ENCODE measurements at regions of chr1 and their contacts with region 1.

Region 1: GRCh38 chr1:110203021-110203661 is 7.0 kb upstream of the KCNC4 start:
- DNase-seq: peak; percentile 55 to 83
- H3K4me3 ChIP-seq: no peak overlapping the region
- H3K27ac ChIP-seq: peak overlapping the region; percentile 19
- H3K4me1 ChIP-seq: peaks cover 35% of the 10 kb centered on the region
- H3K27me3 ChIP-seq: no peaks in the 10 kb centered on the region
- CTCF ChIP-seq: peak; percentile 99

Region 2: DNA sequence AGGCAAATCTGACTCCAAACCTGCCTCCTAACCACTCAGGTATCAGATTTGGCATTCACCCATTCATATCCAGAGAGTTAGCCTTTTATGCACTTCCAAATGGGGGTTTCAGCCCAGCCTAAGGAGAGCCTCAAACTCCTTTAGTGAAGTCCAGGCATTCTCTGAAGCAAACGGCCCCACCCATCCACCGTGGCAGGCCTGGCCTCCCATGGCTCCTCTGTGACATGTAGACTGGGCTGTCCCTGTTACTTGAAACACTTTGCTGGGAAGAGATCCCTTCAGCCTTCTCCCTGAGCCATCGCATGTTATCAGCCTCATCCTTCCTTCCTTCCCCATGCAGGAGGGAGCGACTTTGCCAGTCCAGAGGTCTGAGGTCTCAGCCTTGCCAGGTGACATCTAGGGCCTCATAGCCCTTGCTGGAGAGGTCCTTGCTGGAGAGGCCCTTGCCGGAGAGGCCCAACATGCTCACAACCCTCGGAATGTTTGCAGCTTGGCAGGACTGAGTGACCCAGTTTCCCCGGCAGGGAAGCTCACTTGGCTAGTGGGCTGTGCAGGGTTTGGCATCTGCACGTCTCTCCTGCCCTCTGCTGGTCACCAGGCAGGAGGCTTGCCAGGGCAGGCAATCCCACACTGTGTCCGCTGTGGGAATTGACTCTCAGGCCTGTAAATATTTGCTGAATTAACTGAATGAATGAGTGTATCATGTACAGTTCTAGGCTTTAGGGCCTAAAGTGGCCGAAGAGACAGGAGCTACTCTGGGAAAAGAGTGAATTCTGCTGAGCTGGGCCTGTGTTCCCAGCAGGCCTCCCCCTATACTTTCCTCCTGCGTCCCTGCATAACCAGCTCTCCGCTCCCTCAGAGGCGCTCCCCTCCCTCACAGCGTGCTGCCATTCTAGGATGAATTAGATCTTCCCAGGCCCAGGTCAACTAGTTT is 109.3 kb after region 1 on chr1:
- CTCF ChIA-PET with region 1: interaction called, 33 read pairs
- POLR2A ChIA-PET with region 1: interaction called, 3 read pairs
- intact Hi-C with region 1: loop called (anchors 1 kb)
- DNase-seq: peak; percentile 72 to 74
- H3K4me3 ChIP-seq: no peak overlapping the region
- H3K27ac ChIP-seq: no peak overlapping the region
- H3K4me1 ChIP-seq: no peaks in the 10 kb centered on the region
- H3K27me3 ChIP-seq: no peaks in the 10 kb centered on the region
- CTCF ChIP-seq: peak; percentile 99

Region 3: DNA sequence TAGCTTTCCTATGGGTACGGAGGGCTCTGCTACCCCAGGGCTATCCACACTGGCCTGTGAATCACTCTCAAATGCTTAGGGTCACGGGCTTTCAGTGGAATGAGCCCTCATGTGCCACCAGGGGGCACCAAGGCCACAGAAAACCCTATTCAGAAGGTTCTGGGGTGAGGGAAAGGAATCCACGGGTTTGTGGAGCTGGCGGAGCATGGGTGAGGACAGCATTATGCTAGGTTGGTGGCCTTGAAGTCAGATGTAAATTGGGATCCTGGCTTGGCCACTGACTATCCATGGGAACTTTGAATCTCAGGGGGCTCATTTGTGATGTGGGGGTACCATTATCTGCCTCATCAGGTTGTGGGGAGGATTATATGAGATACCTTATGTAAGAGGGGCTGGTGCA is 209.4 kb after region 1 on chr1:
- CTCF ChIA-PET with region 1: interaction called, 21 read pairs
- POLR2A ChIA-PET with region 1: no interaction called
- intact Hi-C with region 1: loop called (anchors 5 kb)
- DNase-seq: peak; percentile 60 to 74
- H3K4me3 ChIP-seq: no peak overlapping the region
- H3K27ac ChIP-seq: no peak overlapping the region
- H3K4me1 ChIP-seq: peaks cover 9% of the 10 kb centered on the region
- H3K27me3 ChIP-seq: no peaks in the 10 kb centered on the region
- CTCF ChIP-seq: peak; percentile 96

Region 4: DNA sequence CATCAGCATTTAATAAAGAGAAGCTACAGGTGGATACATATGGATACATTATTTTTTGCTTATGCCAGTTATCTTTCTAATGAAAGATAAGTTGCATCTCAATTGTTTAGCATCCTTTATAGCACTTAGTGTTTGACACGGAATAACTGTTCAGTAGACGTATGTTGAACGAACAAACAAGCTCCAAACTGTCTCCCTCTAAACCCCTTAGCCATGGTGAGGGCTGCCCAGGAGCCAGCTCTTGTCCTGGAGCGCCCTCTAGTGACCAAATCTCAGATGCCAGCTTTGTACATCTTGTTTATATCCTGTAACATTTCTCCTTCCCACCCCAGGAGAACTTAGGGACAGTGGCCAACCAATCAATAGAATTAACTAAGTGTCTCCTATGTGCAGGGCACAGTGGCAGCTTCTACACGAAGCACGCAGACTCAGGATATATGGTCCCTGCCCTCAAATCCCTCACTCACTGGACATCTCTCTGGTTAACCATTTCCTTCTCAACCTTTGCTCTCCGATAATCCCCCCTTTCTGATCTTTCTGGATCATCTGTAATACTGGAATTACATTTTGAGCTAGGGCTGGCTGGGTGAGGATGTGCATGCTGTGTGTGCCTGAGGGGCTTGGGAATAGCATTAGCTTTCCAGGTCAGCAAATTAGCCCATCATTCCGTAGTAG is 292.9 kb after region 1 on chr1:
- CTCF ChIA-PET with region 1: interaction called, 25 read pairs
- POLR2A ChIA-PET with region 1: no interaction called
- intact Hi-C with region 1: loop called (anchors 1 kb)
- DNase-seq: peak; percentile 71 to 75
- H3K4me3 ChIP-seq: no peak overlapping the region
- H3K27ac ChIP-seq: no peak overlapping the region
- H3K4me1 ChIP-seq: no peaks in the 10 kb centered on the region
- H3K27me3 ChIP-seq: peaks cover 39% of the 10 kb centered on the region
- CTCF ChIP-seq: peak; percentile 100

Measured in PC-9 (cell line).